Ascending aorta (tissue), 2 donors: ENCODE measurements at regions of chr12 and their contacts with region 1.

Region 1: DNA sequence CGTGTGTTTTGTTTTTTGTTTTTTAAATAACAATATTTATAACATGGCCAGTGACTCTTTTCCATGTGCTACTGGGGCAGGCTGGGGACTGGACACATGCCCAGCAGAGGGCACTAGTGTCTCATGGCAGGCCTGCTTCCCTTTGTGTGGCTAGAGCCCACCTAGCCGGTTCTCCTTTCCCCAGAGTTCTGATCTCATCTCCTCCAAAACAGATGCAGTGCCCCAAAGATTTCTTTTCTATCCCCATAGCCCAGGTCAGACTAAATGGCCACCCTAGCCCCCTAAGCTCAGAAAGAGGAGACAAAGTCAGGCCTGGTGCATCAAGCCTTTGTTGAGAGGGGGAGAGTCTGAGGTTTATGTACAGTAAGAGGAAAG is 21.2 kb downstream of the PRPF40B start:
- DNase-seq: peak in 1 of 2 donors; percentile 88
- H3K4me3 ChIP-seq: no peak overlapping the region
- H3K27ac ChIP-seq: peak overlapping the region; percentile 21 to 23
- H3K4me1 ChIP-seq: peaks cover 0 to 19% of the 10 kb centered on the region in 2 donors
- H3K27me3 ChIP-seq: no peaks in the 10 kb centered on the region
- CTCF ChIP-seq: peak; percentile 93 to 98 (median 93)

Region 2: DNA sequence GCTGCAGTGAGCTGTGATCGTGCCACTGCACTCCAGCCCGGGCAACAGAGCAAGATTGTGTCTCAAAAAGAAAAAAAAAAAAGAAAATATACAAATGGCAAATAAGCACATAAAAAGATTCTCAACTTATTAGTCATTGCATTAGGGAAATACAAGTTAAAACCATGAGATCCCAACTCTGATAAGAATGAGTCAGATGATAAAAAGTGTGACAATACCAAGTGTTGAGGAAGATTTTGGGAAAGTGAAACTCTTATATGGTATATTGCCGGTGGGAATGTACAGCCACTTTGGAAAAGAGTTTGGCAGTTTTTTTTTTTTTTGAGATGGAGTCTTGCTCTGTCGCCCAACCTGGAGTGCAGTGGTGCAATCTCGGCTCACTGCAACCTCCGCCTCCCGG is 28.9 kb before region 1 on chr12:
- intact Hi-C with region 1: no loop called
- DNase-seq: no peak
- H3K4me3 ChIP-seq: no peak overlapping the region
- H3K27ac ChIP-seq: no peak overlapping the region
- H3K4me1 ChIP-seq: no peaks in the 10 kb centered on the region
- H3K27me3 ChIP-seq: no peaks in the 10 kb centered on the region
- CTCF ChIP-seq: no peak

Region 3: GRCh38 chr12:49626169-49626835 is 18.3 kb before region 1 on chr12:
- intact Hi-C with region 1: no loop called
- DNase-seq: no peak
- H3K4me3 ChIP-seq: no peak overlapping the region
- H3K27ac ChIP-seq: no peak overlapping the region
- H3K4me1 ChIP-seq: peaks cover 6 to 11% of the 10 kb centered on the region in 2 donors
- H3K27me3 ChIP-seq: no peaks in the 10 kb centered on the region
- CTCF ChIP-seq: no peak

Region 4: GRCh38 chr12:49673446-49674317 is 29.1 kb after region 1 on chr12:
- intact Hi-C with region 1: loop called (anchors 2 kb)
- DNase-seq: peak; percentile 81 to 96
- H3K4me3 ChIP-seq: no peak overlapping the region
- H3K27ac ChIP-seq: peak overlapping the region; percentile 84 to 97
- H3K4me1 ChIP-seq: peaks cover 21 to 43% of the 10 kb centered on the region in 2 donors
- H3K27me3 ChIP-seq: no peaks in the 10 kb centered on the region
- CTCF ChIP-seq: peak; percentile 29 to 76 (median 35)